Mammary epithelial cell (primary cell): ENCODE measurements at regions of chr5 and their contacts with region 1.

Region 1: GRCh38 chr5:2227433-2227832 is 344.7 kb upstream of the IRX4 start:
- DNase-seq: no peak
- H3K4me3 ChIP-seq: no peak overlapping the region
- H3K27ac ChIP-seq: no peak overlapping the region
- H3K4me1 ChIP-seq: no peaks in the 10 kb centered on the region
- H3K27me3 ChIP-seq: no peaks in the 10 kb centered on the region
- CTCF ChIP-seq: no peak

Region 2: GRCh38 chr5:1824109-1824821 is 403.2 kb before region 1 on chr5:
- CTCF ChIA-PET with region 1: no interaction called
- dilution Hi-C with region 1: no loop called
- in situ Hi-C with region 1: no loop called
- intact Hi-C with region 1: no loop called
- DNase-seq: no peak
- H3K4me3 ChIP-seq: no peak overlapping the region
- H3K27ac ChIP-seq: no peak overlapping the region
- H3K4me1 ChIP-seq: no peaks in the 10 kb centered on the region
- H3K27me3 ChIP-seq: no peaks in the 10 kb centered on the region
- CTCF ChIP-seq: no peak

Region 3: DNA sequence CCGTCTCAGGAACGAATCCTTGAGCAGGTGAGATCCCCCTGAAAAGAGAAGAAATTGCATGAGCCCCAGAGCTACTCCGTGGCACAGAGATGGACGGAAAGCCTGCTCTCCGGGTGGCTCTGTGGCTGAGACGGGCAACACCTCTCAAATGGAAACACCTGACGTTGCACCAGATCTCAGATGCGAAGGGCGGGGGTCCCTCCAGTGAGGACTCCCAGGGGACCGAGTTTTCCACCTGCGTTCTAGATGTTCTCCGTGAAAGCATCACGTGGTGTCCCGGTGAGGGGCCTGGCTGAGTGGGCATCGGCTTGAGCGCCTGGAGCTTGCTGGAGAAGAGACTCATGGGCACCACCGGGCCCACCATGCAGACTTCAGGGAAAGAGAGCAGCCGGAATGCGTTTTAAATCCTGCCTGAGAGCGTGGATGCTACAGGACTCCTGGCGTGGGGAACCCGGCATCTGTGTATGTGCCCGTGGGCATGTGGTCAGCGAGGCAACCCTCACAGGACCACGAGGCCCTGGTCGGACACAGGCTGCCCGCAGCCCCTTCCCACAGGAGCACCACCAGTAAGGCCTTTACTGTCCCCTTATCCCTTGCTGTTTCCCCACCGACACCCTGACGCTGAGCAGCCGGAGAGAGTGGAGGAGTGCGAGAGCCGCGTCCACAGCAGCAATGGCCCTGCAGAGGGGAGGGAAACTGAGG is 33.7 kb after region 1 on chr5:
- CTCF ChIA-PET with region 1: no interaction called
- dilution Hi-C with region 1: loop called (anchors 5 kb)
- in situ Hi-C with region 1: no loop called
- intact Hi-C with region 1: no loop called
- DNase-seq: no peak
- H3K4me3 ChIP-seq: no peak overlapping the region
- H3K27ac ChIP-seq: no peak overlapping the region
- H3K4me1 ChIP-seq: no peaks in the 10 kb centered on the region
- H3K27me3 ChIP-seq: no peaks in the 10 kb centered on the region
- CTCF ChIP-seq: no peak

Region 4: DNA sequence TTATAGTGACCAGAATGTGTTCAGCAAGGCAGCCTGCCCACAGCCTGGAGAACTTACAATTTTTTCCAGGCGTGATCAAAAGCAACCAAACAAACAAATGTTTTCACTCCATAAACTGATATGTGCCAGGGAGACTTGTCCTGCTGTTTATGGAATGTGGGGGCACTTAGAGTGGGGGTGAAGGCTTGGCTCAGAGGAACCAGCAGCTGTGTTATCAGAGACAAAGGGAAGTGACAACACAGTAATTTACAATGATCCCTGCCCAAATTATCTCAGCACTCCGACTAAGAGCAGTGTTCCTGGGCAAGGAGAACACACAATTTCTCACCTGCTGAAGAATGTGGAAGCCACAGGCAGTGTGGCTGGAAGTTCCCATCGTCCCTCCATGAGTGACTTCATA is 84.4 kb after region 1 on chr5:
- CTCF ChIA-PET with region 1: no interaction called
- dilution Hi-C with region 1: no loop called
- in situ Hi-C with region 1: no loop called
- intact Hi-C with region 1: no loop called
- DNase-seq: no peak
- H3K4me3 ChIP-seq: no peak overlapping the region
- H3K27ac ChIP-seq: no peak overlapping the region
- H3K4me1 ChIP-seq: no peaks in the 10 kb centered on the region
- H3K27me3 ChIP-seq: no peaks in the 10 kb centered on the region
- CTCF ChIP-seq: no peak